MCF 10A (cell line): ENCODE measurements at regions of chrX and their contacts with region 1.

Region 1: DNA sequence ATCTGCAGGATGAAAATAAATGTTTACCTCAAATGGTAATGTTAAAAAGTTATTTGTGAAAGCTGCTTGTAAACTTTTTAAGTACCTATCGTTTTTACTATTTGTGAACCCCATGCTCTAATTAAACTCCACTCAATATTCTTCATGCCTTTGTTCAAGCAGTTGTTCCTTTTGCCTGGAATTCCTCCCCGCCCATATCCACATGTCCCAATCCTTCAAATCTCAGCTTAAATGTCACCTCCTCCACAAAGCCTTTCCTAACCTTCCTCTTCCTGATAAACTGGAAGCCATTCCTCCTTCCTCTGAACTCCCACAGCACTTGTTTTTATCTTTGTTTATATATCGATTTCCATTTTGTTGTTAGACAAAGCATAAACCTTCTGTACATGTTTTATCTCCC is 2.4 kb downstream of the MORC4 start:
- DNase-seq: no peak
- H3K4me3 Mint-ChIP-seq: no peak overlapping the region
- H3K27ac Mint-ChIP-seq: no peak overlapping the region
- H3K4me1 Mint-ChIP-seq: peaks cover 15% of the 10 kb centered on the region
- H3K27me3 Mint-ChIP-seq: peaks cover 77% of the 10 kb centered on the region
- CTCF ChIP-seq: no peak

Region 2: GRCh38 chrX:106987488-106987887 is 10.1 kb before region 1 on chrX:
- CTCF ChIA-PET with region 1: interaction called, 9 read pairs
- POLR2A ChIA-PET with region 1: no interaction called
- intact Hi-C with region 1: loop called (anchors 1 kb)
- DNase-seq: no peak
- H3K4me3 Mint-ChIP-seq: no peak overlapping the region
- H3K27ac Mint-ChIP-seq: no peak overlapping the region
- H3K4me1 Mint-ChIP-seq: no peaks in the 10 kb centered on the region
- H3K27me3 Mint-ChIP-seq: peaks cover 17% of the 10 kb centered on the region
- CTCF ChIP-seq: no peak

Region 3: DNA sequence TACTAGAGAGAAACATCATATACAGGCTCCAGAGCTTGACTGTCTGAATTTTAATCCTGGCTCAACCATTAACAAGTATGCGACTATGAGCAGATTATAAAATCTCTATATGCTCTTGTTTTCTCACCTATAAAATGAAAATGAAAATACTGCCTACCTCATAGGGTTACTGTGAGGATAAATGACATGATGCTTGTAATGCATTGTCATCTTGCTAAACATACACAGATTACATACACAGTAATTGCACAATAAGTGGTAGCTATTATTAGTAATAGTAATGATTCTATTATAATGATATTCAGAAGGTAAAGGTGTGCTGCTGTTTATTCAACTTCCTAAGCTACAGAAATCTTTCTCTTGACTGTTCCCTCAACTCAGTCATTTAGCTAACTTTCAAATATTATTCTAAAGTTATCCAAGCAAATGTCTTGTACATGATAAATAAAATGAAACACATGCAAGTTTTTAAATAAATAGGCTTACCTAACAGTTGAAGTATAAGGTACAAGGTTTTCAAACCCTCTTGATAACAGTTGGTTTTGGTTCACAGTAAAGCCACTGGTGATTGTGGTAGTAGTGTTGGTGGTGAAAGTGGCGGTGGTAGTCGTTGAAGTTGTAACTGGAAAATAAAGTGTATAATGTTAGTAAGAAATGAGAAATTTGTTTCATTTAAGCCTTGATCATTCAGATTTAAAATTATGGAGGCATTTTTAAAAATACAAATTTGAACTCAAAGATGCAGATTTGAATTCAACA is 169.7 kb after region 1 on chrX:
- CTCF ChIA-PET with region 1: no interaction called
- POLR2A ChIA-PET with region 1: no interaction called
- intact Hi-C with region 1: no loop called
- DNase-seq: no peak
- H3K4me3 Mint-ChIP-seq: no peak overlapping the region
- H3K27ac Mint-ChIP-seq: no peak overlapping the region
- H3K4me1 Mint-ChIP-seq: no peaks in the 10 kb centered on the region
- H3K27me3 Mint-ChIP-seq: peaks cover 57% of the 10 kb centered on the region
- CTCF ChIP-seq: no peak